ENCODE measurements at regions of chr5 and their contacts with region 1.

Region 1: GRCh38 chr5:108919591-108920326 is 172.1 kb downstream of the FER start:
- DNase-seq: no peak
- H3K4me3 Mint-ChIP-seq: no peak overlapping the region
- H3K27ac Mint-ChIP-seq: no peak overlapping the region
- H3K4me1 Mint-ChIP-seq: peaks cover 18% of the 10 kb centered on the region
- H3K27me3 Mint-ChIP-seq: no peaks in the 10 kb centered on the region
- CTCF ChIP-seq: no peak

Region 2: DNA sequence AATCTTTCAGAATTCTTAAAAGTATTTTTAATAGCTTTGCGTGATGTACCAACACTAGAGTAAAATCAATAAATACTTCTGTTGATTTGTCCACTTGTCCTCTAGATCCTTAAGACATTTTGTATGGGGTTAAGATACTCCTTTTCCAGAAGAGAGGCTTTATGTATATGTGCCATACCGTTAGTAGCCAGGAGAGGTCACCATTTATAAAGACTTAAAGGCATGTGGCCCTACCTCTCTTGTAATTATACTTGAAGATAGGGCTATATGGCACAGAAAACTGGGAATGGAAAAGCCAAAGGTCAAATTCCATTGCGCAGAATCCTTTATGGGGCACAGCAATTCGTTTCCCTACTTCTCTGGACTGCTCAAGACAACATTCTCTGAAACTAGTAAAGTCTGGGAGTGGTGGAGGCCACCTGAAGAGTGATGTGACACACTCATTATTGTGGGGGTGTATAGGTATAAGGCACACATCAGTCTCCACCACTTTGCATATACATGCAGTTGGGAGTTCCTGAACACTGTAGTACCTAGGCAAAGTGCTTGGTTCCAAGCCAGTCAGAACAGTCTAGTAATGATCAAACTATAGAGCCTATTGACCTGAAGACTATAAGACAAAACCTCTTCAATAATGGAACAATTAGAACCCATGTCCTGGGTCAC is 397.8 kb before region 1 on chr5:
- CTCF ChIA-PET with region 1: no interaction called
- intact Hi-C with region 1: loop called (anchors 5 kb)
- DNase-seq: peak; percentile 68
- H3K4me3 Mint-ChIP-seq: no peak overlapping the region
- H3K27ac Mint-ChIP-seq: no peak overlapping the region
- H3K4me1 Mint-ChIP-seq: no peaks in the 10 kb centered on the region
- H3K27me3 Mint-ChIP-seq: peaks cover 43% of the 10 kb centered on the region
- CTCF ChIP-seq: peak; percentile 68

Region 3: GRCh38 chr5:108700930-108701329 is 218.8 kb before region 1 on chr5:
- CTCF ChIA-PET with region 1: no interaction called
- intact Hi-C with region 1: no loop called
- DNase-seq: no peak
- H3K4me3 Mint-ChIP-seq: no peak overlapping the region
- H3K27ac Mint-ChIP-seq: no peak overlapping the region
- H3K4me1 Mint-ChIP-seq: no peaks in the 10 kb centered on the region
- H3K27me3 Mint-ChIP-seq: no peaks in the 10 kb centered on the region
- CTCF ChIP-seq: no peak

Region 4: DNA sequence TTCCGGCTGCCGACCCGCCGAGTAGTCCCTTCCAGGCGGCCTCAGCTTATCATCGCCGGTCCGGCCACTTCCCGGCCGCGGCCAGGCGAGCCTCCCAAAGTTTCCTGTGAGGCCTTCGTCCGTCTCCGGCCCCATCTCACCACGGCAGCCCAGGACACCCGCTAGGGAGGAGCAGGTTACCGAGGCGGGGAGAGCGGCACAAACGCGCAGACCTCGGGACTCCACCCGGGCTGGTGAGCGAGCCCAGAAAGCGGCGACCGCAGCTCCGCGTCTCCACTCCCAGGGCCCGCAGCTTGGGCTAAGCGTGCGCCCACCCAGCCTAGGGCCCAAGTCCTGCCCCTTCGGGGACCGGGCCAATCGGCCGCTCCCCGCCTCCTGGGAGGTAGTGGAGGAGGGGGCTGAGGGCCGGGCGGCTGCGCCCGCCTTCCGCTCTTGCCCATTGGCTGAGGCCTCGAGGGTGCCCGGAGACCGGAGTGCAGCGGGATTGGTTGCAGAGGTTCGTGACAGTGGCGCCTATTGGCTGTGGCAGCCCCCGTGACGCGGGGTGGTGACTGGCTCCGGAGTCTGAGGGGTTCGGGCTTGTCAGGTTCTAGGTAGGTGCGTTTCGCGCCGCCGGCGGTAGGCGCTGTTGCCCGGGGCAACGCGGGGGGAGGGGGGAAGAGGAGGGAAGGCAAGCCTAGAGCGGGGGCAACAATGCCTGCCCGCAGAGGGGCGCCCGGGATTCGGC is 171.2 kb before region 1 on chr5:
- CTCF ChIA-PET with region 1: no interaction called
- intact Hi-C with region 1: loop called (anchors 5 kb)
- DNase-seq: peak; percentile 99
- H3K4me3 Mint-ChIP-seq: peak overlapping the region; percentile 87
- H3K27ac Mint-ChIP-seq: peak overlapping the region; percentile 99
- H3K4me1 Mint-ChIP-seq: peaks cover 22% of the 10 kb centered on the region
- H3K27me3 Mint-ChIP-seq: no peaks in the 10 kb centered on the region
- CTCF ChIP-seq: no peak

Region 5: GRCh38 chr5:109316634-109317033 is 396.9 kb after region 1 on chr5:
- CTCF ChIA-PET with region 1: no interaction called
- intact Hi-C with region 1: loop called (anchors 2 kb)
- DNase-seq: no peak
- H3K4me3 Mint-ChIP-seq: no peak overlapping the region
- H3K27ac Mint-ChIP-seq: peak overlapping the region; percentile 25
- H3K4me1 Mint-ChIP-seq: peaks cover 27% of the 10 kb centered on the region
- H3K27me3 Mint-ChIP-seq: no peaks in the 10 kb centered on the region
- CTCF ChIP-seq: no peak

Region 6: DNA sequence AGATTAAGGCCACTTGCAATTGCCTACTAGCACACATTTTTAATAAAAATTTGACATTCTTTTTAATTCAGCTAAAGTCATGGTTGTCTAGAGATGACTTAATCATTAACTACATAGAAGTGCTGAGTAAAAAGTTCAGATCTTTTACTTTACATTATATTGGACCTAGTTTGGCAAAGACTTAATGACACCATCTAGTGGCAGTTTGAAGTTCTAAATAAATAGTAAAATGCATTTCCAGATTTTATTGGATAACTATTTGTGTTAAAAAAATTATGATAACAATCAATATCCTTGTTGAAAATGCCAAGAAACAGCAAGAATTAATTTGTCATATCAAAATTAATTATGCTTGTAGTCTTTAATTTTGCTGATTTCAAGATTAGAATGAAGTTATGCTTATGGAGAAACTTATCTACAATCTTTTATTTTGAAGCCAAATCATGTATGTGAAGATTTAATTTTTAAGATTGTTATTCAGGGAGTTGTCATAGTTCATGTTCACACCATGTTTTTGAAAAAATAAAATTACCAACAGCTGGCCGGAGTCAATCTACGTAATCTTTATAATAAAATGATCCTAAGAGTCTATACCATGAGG is 559.6 kb after region 1 on chr5:
- CTCF ChIA-PET with region 1: no interaction called
- intact Hi-C with region 1: loop called (anchors 1 kb)
- DNase-seq: no peak
- H3K4me3 Mint-ChIP-seq: no peak overlapping the region
- H3K27ac Mint-ChIP-seq: no peak overlapping the region
- H3K4me1 Mint-ChIP-seq: no peaks in the 10 kb centered on the region
- H3K27me3 Mint-ChIP-seq: no peaks in the 10 kb centered on the region
- CTCF ChIP-seq: peak; percentile 29

Measured in Calu3 (cell line).